ENCODE measurements at regions of chr3 and their contacts with region 1.

Region 1: DNA sequence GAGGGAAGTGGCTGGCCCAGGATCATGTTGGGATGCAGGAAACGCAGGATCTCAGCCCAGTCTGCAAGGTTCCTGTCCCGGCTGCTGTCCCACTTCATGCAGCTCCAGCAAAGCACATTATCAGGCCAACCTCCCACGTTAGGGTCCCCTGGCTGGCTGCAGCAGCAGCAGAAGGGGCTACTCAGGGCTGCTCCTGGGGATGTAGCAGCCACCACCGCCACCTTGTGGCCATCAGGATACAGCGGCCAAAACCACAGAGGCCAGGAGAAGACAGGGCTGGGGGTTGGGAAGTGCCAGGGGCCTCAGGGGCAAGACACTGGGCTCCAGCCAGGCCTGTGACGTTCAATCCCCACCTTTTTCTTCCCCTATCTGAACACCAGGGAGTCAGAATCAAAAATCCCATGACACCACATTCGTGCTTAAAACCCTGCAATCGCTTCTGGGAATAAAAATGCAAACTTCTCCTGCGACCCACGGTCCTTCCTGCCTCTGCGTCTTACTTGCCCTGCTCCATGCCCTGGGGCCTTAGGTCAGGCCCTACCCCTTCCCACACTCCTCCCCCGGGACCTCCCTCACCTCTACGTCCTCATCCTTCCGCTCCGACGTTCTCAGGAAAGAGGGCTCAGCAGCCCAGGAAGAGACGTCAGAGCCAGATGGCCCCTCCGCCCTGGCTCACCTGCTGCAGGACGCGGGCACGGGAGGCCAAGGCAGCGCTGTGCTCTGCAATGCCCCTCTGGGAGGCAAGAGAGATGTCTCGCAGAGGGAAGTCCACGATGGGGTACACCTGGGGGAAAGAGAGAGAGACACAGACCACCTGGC is 21.5 kb downstream of the SSUH2 start:
- DNase-seq: no peak
- H3K4me3 ChIP-seq: peak overlapping the region in 1 of 8 donors; percentile 31
- H3K27ac ChIP-seq: no peak overlapping the region
- H3K4me1 ChIP-seq: peaks cover 0 to 15% (median 10%) of the 10 kb centered on the region in 6 donors
- H3K27me3 ChIP-seq: peaks cover 0 to 12% (median 0%) of the 10 kb centered on the region in 7 donors
- CTCF ChIP-seq: peak; percentile 27 to 85 (median 72)
- POLR2A ChIP-seq: no peak

Region 2: DNA sequence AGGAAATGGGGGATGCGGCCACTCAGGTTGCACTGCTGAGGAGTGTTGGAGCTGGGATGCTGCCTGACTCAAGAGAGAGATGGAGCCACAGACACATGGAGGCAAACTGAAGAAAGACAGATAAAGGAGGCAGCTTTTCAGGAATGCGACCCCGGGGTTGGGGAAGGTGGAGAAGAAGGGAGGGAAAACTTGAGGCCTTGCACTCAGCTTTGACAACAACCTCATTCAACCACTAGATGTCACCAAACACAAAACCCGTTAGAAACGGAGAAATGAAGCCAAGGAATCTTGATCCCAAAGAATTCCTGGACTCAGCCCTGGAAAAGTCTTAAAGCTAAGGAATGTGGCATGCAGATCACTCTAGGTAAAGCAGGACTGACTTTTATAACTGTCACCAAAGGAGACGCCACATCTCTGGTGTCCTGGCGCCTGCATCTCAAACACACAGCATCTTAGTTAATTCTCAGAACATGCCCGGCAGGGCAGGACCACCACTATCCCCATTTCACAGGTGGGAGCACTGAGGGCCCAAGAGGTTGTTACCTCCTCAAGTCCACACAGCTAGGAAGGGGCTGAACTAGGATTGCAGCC is 181.0 kb before region 1 on chr3:
- intact Hi-C with region 1: loop called (anchors 5 kb)
- DNase-seq: no peak
- H3K4me3 ChIP-seq: no peak overlapping the region
- H3K27ac ChIP-seq: no peak overlapping the region
- H3K4me1 ChIP-seq: peaks cover 8 to 54% (median 25%) of the 10 kb centered on the region in 6 donors
- H3K27me3 ChIP-seq: no peaks in the 10 kb centered on the region
- CTCF ChIP-seq: peak in 10 of 11 experiments; percentile 15 to 78 (median 58)
- POLR2A ChIP-seq: no peak

Region 3: DNA sequence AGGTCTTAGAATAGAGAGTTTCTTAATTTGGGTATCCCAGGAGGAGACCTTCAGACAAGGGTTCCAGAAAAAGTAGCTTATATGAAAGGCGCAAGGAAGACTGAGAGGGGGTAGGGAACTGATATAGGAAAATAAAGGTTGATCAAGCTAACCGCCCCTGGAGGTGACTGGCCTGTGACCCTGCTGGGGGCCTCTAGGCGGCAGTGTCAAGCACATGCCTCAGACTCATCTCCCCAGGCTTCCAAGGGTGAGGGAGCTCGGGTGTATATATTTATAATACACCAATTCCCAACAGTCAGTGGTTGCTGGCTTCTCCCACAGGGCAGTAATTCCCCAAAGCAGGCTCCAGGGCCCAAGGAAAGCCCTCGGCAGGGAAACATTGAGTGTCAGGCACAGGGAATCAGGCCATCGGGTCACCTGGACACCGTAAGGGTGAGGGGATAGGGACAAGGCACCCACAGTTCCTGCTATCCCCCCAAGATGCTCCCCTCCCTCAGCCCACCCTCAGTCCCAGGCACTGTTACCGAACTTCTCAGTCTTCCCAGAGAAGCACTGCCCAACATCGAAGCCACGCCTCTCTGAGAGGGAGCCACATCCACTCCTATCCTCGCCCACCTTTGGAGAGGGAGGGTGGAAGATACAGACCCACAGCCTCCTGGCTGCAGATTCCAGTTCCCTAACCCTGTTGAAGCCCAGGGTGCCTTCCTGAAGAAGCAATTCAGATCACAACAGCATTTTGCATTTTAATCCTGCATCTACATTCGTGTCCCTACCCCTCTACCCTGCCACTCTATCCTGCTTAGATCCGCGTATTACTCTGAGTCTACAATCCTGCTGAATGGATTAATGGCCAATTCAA is 91.0 kb after region 1 on chr3:
- intact Hi-C with region 1: no loop called
- DNase-seq: no peak
- H3K4me3 ChIP-seq: no peak overlapping the region
- H3K27ac ChIP-seq: no peak overlapping the region
- H3K4me1 ChIP-seq: no peaks in the 10 kb centered on the region
- H3K27me3 ChIP-seq: no peaks in the 10 kb centered on the region
- CTCF ChIP-seq: no peak
- POLR2A ChIP-seq: no peak

Measured in spleen (tissue), 13 donors.